Heart right ventricle (tissue), 16 donors: ENCODE measurements at regions of chr16 and their contacts with region 1.

Region 1: GRCh38 chr16:24820522-24820921 is 25.2 kb upstream of the SLC5A11 start:
- DNase-seq: no peak
- ATAC-seq: no peak
- H3K4me3 ChIP-seq: no peak overlapping the region
- H3K27ac ChIP-seq: no peak overlapping the region
- H3K4me1 ChIP-seq: no peaks in the 10 kb centered on the region
- H3K27me3 ChIP-seq: no peaks in the 10 kb centered on the region
- CTCF ChIP-seq: no peak

Region 2: GRCh38 chr16:24562811-24563210 is 257.7 kb before region 1 on chr16:
- intact Hi-C with region 1: loop called in 2 of 10 experiments (anchors 5 to 10 kb)
- DNase-seq: no peak
- ATAC-seq: no peak
- H3K4me3 ChIP-seq: no peak overlapping the region
- H3K27ac ChIP-seq: no peak overlapping the region
- H3K4me1 ChIP-seq: no peaks in the 10 kb centered on the region
- H3K27me3 ChIP-seq: no peaks in the 10 kb centered on the region
- CTCF ChIP-seq: no peak

Region 3: DNA sequence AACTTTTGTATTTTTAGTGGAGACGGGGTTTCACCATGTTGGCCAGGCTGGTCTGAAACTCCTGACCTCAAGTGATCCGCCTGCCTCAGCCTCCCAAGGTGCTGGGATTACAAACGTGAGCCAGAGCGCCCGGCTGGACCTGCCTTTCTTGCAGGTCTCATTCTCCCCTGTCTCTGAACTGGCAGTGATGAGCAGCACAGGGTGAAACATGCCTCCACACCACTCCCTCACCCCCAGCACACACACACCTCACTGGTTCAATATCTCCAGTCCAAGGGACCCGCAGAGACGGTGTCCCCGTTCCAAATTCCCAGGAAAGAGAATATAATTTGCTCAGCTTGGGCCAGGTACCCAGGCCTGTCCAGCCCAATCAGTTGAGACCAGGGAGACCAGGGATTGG is 48.5 kb after region 1 on chr16:
- intact Hi-C with region 1: no loop called
- DNase-seq: no peak
- ATAC-seq: no peak
- H3K4me3 ChIP-seq: no peak overlapping the region
- H3K27ac ChIP-seq: no peak overlapping the region
- H3K4me1 ChIP-seq: no peaks in the 10 kb centered on the region
- H3K27me3 ChIP-seq: peaks cover 0 to 4% (median 0%) of the 10 kb centered on the region in 7 donors
- CTCF ChIP-seq: no peak

Region 4: DNA sequence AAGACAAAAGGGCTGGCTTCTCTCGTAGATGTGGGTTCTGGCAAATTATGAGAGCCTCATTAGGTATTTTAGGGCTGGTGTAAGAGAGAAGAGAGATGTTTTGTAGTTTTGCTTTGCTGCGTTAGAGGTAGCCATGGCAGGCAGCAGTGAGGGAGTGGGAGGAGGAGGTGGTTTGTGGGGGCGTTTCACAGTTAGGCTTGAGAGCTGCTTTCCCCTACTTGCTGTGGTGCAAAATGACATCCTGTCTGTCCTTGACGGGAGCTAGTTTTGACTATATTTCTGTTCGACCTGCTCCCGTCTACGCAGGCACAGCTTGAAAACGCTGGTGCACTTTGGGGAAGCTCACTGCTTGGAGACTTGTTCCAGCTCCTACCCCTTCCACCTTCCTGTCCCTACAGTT is 100.7 kb after region 1 on chr16:
- intact Hi-C with region 1: loop called in 1 of 10 experiments (anchors 10 kb)
- DNase-seq: no peak
- ATAC-seq: no peak
- H3K4me3 ChIP-seq: no peak overlapping the region
- H3K27ac ChIP-seq: no peak overlapping the region
- H3K4me1 ChIP-seq: no peaks in the 10 kb centered on the region
- H3K27me3 ChIP-seq: no peaks in the 10 kb centered on the region
- CTCF ChIP-seq: no peak

Region 5: DNA sequence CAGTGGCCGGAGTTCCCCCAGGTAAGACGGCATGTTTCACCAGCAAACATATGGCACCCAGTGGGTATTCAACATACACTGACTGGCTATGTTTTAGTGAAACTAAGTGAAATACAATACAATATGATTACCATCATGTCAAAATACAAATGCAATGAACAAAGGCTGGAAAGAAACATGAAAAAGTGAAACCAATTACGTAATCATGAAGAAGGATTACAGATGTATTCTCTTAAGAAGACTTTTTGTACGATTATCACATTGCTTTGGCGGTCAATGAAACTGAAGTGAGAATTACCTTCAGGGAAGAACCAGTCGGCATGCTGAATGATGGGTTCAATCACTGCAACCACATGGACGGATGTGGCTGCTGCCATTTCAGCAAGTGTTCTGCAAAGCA is 123.0 kb after region 1 on chr16:
- intact Hi-C with region 1: loop called in 1 of 10 experiments (anchors 10 kb)
- DNase-seq: no peak
- ATAC-seq: no peak
- H3K4me3 ChIP-seq: no peak overlapping the region
- H3K27ac ChIP-seq: no peak overlapping the region
- H3K4me1 ChIP-seq: peaks cover 0 to 4% (median 0%) of the 10 kb centered on the region in 9 donors
- H3K27me3 ChIP-seq: no peaks in the 10 kb centered on the region
- CTCF ChIP-seq: no peak